Caco-2 (cell line): ENCODE measurements at regions of chr10 and their contacts with region 1.

Region 1: GRCh38 chr10:5147255-5147980 is 37.5 kb downstream of the AKR1C8 start:
- DNase-seq: peak; percentile 84 to 85
- H3K4me3 ChIP-seq: no peak overlapping the region
- H3K4me3 Mint-ChIP-seq: peak overlapping the region; percentile 53
- H3K27ac Mint-ChIP-seq: peak overlapping the region; percentile 91
- H3K4me1 ChIP-seq: peaks cover 43% of the 10 kb centered on the region
- H3K4me1 Mint-ChIP-seq: peaks cover 34% of the 10 kb centered on the region
- H3K27me3 ChIP-seq: no peaks in the 10 kb centered on the region
- H3K27me3 Mint-ChIP-seq: no peaks in the 10 kb centered on the region
- CTCF ChIP-seq: no peak

Region 2: GRCh38 chr10:5014936-5015335 is 132.5 kb before region 1 on chr10:
- CTCF ChIA-PET with region 1: no interaction called
- POLR2A ChIA-PET with region 1: no interaction called
- intact Hi-C with region 1: loop called (anchors 5 kb)
- DNase-seq: peak; percentile 48 to 60
- H3K4me3 ChIP-seq: no peak overlapping the region
- H3K4me3 Mint-ChIP-seq: no peak overlapping the region
- H3K27ac Mint-ChIP-seq: no peak overlapping the region
- H3K4me1 ChIP-seq: 0 out of 2 replicates have a peak, but pooled peaks cover 1% of the 10 kb centered on the region
- H3K4me1 Mint-ChIP-seq: no peaks in the 10 kb centered on the region
- H3K27me3 ChIP-seq: no peaks in the 10 kb centered on the region
- H3K27me3 Mint-ChIP-seq: no peaks in the 10 kb centered on the region
- CTCF ChIP-seq: peak; percentile 55 to 67

Region 3: DNA sequence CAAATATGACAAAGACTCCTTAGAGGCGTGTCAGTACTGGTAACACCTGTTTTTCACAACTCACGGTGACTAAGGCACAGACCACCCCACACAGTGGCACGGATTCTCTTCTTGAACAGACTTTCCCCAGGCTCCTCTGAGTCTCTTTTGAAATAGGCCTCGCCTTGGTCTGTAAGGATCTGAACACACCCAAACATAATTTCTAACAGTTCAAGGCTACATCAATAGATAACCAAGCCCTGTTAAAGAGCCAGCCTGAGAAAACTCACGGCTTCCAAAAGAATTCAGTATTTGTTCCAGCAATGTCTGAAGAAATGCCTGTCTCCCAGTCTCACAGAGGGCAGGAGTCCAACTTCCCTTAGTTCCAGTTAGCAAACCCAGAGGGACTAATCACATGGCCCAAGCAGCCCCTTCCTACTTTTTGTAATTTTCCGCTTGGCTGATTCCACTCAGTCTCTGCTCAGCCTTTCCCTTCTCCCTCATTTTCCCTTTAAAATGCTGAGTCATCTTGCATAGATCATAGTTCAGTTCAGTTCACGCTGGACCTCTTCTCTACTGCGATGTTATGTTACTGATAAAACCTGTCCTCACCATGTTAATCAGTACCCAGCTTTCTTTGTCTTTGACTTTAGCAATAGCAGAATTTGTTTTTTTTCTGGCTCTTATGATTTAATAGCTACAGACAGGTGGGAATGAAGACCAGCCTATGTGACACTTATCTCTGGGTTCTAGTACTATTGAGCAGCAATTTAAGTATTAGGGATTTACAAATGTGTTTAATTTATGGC is 75.8 kb before region 1 on chr10:
- CTCF ChIA-PET with region 1: no interaction called
- POLR2A ChIA-PET with region 1: no interaction called
- intact Hi-C with region 1: loop called (anchors 1 kb)
- DNase-seq: peak; percentile 95 to 96
- H3K4me3 ChIP-seq: peak overlapping the region; percentile 2; the same call in 1 of the 2 replicates
- H3K4me3 Mint-ChIP-seq: peak overlapping the region; percentile 56
- H3K27ac Mint-ChIP-seq: peak overlapping the region; percentile 85
- H3K4me1 ChIP-seq: peaks cover 64% of the 10 kb centered on the region
- H3K4me1 Mint-ChIP-seq: peaks cover 52% of the 10 kb centered on the region
- H3K27me3 ChIP-seq: no peaks in the 10 kb centered on the region
- H3K27me3 Mint-ChIP-seq: no peaks in the 10 kb centered on the region
- CTCF ChIP-seq: no peak

Region 4: GRCh38 chr10:5105626-5106025 is 41.8 kb before region 1 on chr10:
- CTCF ChIA-PET with region 1: no interaction called
- POLR2A ChIA-PET with region 1: no interaction called
- intact Hi-C with region 1: loop called (anchors 5 kb)
- DNase-seq: no peak
- H3K4me3 ChIP-seq: no peak overlapping the region
- H3K4me3 Mint-ChIP-seq: no peak overlapping the region
- H3K27ac Mint-ChIP-seq: no peak overlapping the region
- H3K4me1 ChIP-seq: no peaks in the 10 kb centered on the region
- H3K4me1 Mint-ChIP-seq: no peaks in the 10 kb centered on the region
- H3K27me3 ChIP-seq: no peaks in the 10 kb centered on the region
- H3K27me3 Mint-ChIP-seq: no peaks in the 10 kb centered on the region
- CTCF ChIP-seq: no peak

Region 5: DNA sequence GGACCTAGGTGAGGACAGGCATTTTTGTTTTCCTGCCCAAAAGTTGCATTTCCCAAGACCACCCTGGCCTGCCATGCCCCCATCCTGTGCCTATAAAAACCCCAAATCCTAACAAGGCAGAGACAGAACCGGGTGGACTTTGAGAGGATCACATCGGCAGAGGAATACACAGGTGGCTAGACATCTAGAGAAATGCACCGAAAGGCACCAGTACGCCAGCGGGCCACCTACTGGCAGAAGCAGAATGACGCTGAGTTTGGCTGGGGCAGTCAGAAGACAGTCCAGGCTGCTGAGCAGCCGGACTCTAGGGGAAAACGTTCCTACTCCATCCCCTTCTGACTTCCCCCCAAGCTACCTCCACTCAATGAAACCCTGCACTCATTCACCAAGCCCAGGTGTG is 52.0 kb after region 1 on chr10:
- CTCF ChIA-PET with region 1: no interaction called
- POLR2A ChIA-PET with region 1: no interaction called
- intact Hi-C with region 1: loop called (anchors 1 kb)
- DNase-seq: no peak
- H3K4me3 ChIP-seq: no peak overlapping the region
- H3K4me3 Mint-ChIP-seq: no peak overlapping the region
- H3K27ac Mint-ChIP-seq: no peak overlapping the region
- H3K4me1 ChIP-seq: peaks cover 23% of the 10 kb centered on the region
- H3K4me1 Mint-ChIP-seq: peaks cover 11% of the 10 kb centered on the region
- H3K27me3 ChIP-seq: no peaks in the 10 kb centered on the region
- H3K27me3 Mint-ChIP-seq: no peaks in the 10 kb centered on the region
- CTCF ChIP-seq: no peak

Region 6: GRCh38 chr10:5234106-5234860 is 86.9 kb after region 1 on chr10:
- CTCF ChIA-PET with region 1: no interaction called
- POLR2A ChIA-PET with region 1: no interaction called
- intact Hi-C with region 1: loop called (anchors 1 kb)
- DNase-seq: peak; percentile 64 to 79
- H3K4me3 ChIP-seq: no peak overlapping the region
- H3K4me3 Mint-ChIP-seq: no peak overlapping the region
- H3K27ac Mint-ChIP-seq: peak overlapping the region; percentile 34
- H3K4me1 ChIP-seq: no peaks in the 10 kb centered on the region; the same call in 1 of the 2 replicates
- H3K4me1 Mint-ChIP-seq: no peaks in the 10 kb centered on the region
- H3K27me3 ChIP-seq: no peaks in the 10 kb centered on the region
- H3K27me3 Mint-ChIP-seq: no peaks in the 10 kb centered on the region
- CTCF ChIP-seq: no peak

Region 7: GRCh38 chr10:5283305-5284158 is 136.1 kb after region 1 on chr10:
- CTCF ChIA-PET with region 1: no interaction called
- POLR2A ChIA-PET with region 1: no interaction called
- intact Hi-C with region 1: loop called (anchors 1 kb)
- DNase-seq: peak; percentile 81 to 83
- H3K4me3 ChIP-seq: no peak overlapping the region
- H3K4me3 Mint-ChIP-seq: peak overlapping the region; percentile 50
- H3K27ac Mint-ChIP-seq: peak overlapping the region; percentile 22
- H3K4me1 ChIP-seq: no peaks in the 10 kb centered on the region; the same call in 1 of the 2 replicates
- H3K4me1 Mint-ChIP-seq: peaks cover 7% of the 10 kb centered on the region
- H3K27me3 ChIP-seq: no peaks in the 10 kb centered on the region
- H3K27me3 Mint-ChIP-seq: peaks cover 7% of the 10 kb centered on the region
- CTCF ChIP-seq: peak; percentile 88 to 92

Region 8: GRCh38 chr10:5502903-5503835 is 355.8 kb after region 1 on chr10:
- CTCF ChIA-PET with region 1: no interaction called
- POLR2A ChIA-PET with region 1: no interaction called
- intact Hi-C with region 1: no loop called
- DNase-seq: peak; percentile 83 to 84
- H3K4me3 ChIP-seq: no peak overlapping the region
- H3K4me3 Mint-ChIP-seq: peak overlapping the region; percentile 25
- H3K27ac Mint-ChIP-seq: peak overlapping the region; percentile 84
- H3K4me1 ChIP-seq: peaks cover 32% of the 10 kb centered on the region
- H3K4me1 Mint-ChIP-seq: peaks cover 38% of the 10 kb centered on the region
- H3K27me3 ChIP-seq: no peaks in the 10 kb centered on the region
- H3K27me3 Mint-ChIP-seq: no peaks in the 10 kb centered on the region
- CTCF ChIP-seq: no peak